Posterior cingulate gyrus (tissue), 11 donors: ENCODE measurements at regions of chr3 and their contacts with region 1.

Region 1: GRCh38 chr3:170811928-170812591 is 57.9 kb downstream of the RPL22L1 start:
- DNase-seq: peak in 8 of 10 donors; percentile 24 to 90 (median 71)

Region 2: GRCh38 chr3:170307671-170308403 is 504.2 kb before region 1 on chr3:
- intact Hi-C with region 1: loop called (anchors 10 kb)
- DNase-seq: no peak

Region 3: GRCh38 chr3:170584585-170585007 is 227.5 kb before region 1 on chr3:
- intact Hi-C with region 1: loop called (anchors 10 kb)
- DNase-seq: peak; percentile 36 to 94 (median 72)

Region 4: DNA sequence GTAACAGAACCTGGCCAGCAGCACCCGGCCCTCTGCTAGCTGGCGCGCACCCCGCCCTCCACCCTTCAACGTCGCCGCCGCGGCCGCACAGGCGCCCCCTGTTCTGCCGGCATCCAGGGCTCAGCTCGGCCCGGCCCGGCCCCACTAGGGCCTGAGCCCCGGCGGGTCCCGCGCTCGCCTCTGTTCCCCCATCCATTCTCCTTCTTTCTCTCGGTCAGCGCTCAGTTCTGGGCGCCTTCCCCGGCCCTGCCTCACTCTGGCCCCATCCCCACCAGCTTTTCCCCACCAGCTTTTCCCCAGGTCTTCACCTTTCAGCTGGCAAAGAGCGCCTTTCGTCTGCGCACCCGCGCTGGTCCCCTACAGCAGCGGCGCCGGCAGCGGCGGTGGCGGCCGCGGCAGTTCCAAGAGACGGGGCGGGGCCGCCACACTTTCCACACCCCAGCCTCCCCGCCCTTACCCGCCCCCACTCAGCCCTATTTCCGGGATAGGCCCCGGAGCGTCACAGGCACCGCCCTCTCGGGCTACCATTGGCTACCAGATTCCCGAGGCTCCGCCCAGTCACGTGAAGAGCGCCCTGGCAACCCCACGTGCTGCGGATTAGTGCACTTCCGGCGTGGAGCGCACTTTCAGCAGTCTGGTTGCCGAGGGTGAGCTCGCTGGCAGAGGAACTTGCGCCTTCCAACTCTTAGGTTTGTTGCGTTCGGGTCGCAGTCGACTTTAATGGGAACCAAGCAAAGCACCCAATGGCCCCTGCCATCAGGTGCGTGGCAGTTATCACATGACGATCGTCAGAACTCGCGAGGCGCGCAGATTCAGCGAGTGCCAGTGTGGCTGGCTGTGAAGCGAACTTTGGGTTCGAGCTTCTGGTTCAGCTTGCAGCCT is 96.4 kb after region 1 on chr3 and contains the start of gene EIF5A2:
- intact Hi-C with region 1: no loop called
- DNase-seq: peak; percentile 83 to 99 (median 92)